ENCODE measurements at regions of chr10 and their contacts with region 1.

Region 1: DNA sequence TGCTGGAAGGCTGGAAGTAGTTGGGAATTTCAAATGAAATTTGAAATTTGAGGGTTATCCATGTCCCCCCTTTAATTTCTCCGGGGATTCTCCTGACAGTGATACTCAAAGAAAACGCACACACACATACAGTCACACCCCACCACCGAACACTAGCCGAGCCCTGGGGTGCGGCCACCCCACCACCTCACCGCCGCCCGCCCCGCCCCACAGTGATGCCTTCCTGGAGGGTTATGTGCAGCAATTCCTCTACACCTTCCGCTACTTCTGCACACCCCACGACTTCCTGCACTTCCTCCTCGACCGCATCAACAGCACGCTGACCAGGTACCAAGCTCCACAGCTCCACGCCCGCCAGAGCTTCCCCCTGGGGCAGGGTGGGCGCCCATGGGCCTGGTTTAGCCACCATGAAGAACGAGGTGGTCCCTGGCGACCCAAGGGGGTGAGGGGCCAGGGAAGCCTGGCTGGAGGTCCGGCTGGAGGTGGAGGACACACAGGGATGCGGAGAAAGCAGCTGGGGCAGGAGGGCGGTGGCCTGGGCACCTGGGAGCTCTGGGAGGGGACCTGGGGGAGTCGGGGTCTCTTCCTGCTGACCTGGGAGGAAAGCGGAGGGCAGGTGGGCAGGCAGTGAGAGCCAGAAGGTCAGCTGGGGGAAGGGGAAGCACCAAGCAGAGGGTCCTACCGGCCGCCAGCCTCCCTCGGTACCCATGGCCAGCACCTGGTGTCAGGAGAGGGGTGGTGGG is 19.4 kb upstream of the UTF1 start:
- DNase-seq: no peak
- ATAC-seq: no peak
- H3K4me3 Mint-ChIP-seq: no peak overlapping the region
- H3K27ac Mint-ChIP-seq: no peak overlapping the region
- H3K4me1 Mint-ChIP-seq: no peaks in the 10 kb centered on the region
- H3K27me3 Mint-ChIP-seq: no peaks in the 10 kb centered on the region
- CTCF ChIP-seq: no peak

Region 2: DNA sequence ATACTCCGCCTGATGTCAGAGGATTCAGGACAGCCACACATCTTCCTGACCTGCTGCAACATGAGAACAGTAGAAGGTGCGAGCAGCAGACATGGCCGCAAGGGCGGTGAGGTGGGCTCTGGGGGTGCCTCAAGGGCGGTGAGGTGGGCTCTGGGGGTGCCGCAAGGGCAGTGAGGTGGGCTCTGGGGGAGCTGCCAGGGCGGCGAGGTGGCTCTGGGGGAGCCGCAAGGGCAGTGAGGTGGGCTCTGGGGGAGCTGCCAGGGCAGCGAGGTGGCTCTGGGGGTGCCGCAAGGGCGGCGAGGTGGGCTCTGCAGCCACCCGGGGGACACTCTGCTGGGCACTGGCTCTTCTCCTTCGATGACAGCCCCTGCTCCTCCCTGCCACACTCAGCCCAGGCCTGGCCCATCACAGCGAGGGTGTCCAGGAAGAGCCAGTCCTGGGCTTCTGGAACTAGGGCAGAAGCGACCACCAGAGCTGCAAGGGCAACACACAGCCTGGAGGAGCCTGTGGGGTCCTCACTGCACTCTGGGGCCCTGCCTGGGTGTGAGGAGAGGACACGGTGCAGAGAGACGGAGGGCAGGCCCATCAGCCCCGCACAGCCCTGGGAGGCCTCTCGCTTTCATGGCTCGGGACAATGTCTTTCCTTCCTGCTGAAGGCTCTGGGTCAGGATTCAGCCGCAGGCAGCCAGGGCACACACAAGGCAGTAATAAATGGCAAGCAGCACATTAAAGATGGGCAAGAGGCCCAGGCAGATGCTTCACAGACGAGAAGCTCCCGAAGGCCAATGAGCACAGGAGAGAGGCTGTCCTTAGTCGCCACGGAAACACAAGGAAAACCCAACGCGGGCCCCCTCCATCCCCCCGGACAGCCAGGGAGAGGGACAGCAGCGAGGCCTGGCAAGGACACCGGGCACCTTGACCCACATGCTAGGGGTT is 945.3 kb before region 1 on chr10:
- CTCF ChIA-PET with region 1: no interaction called
- POLR2A ChIA-PET with region 1: interaction called, 10 read pairs
- DNase-seq: no peak
- ATAC-seq: no peak
- H3K4me3 Mint-ChIP-seq: no peak overlapping the region
- H3K27ac Mint-ChIP-seq: no peak overlapping the region
- H3K4me1 Mint-ChIP-seq: peaks cover 7% of the 10 kb centered on the region
- H3K27me3 Mint-ChIP-seq: no peaks in the 10 kb centered on the region
- CTCF ChIP-seq: no peak